ENCODE measurements at regions of chr1 and their contacts with region 1.

Region 1: GRCh38 chr1:151340870-151341754 is 5.9 kb downstream of the RFX5 start:
- DNase-seq: peak; percentile 19 to 65 (median 60)
- H3K4me3 ChIP-seq: no peak overlapping the region
- H3K4me3 Mint-ChIP-seq: peak overlapping the region in 1 of 7 donors; percentile 34
- H3K27ac ChIP-seq: no peak overlapping the region
- H3K27ac Mint-ChIP-seq: peak overlapping the region; percentile 9 to 95 (median 70)
- H3K4me1 ChIP-seq: peaks cover 18% of the 10 kb centered on the region
- H3K4me1 Mint-ChIP-seq: peaks cover 17 to 31% (median 31%) of the 10 kb centered on the region in 3 donors
- H3K27me3 ChIP-seq: no peaks in the 10 kb centered on the region
- H3K27me3 Mint-ChIP-seq: no peaks in the 10 kb centered on the region

Region 2: GRCh38 chr1:151098126-151098525 is 243.0 kb before region 1 on chr1:
- CTCF ChIA-PET with region 1: interaction called, 12 read pairs
- POLR2A ChIA-PET with region 1: no interaction called
- DNase-seq: no peak
- H3K4me3 ChIP-seq: no peak overlapping the region
- H3K4me3 Mint-ChIP-seq: no peak overlapping the region
- H3K27ac ChIP-seq: no peak overlapping the region
- H3K27ac Mint-ChIP-seq: peak overlapping the region in 2 of 8 donors; percentile 26 to 29
- H3K4me1 ChIP-seq: no peaks in the 10 kb centered on the region
- H3K4me1 Mint-ChIP-seq: no peaks in the 10 kb centered on the region
- H3K27me3 ChIP-seq: no peaks in the 10 kb centered on the region
- H3K27me3 Mint-ChIP-seq: no peaks in the 10 kb centered on the region

Region 3: GRCh38 chr1:151251656-151252470 is 89.2 kb before region 1 on chr1:
- CTCF ChIA-PET with region 1: interaction called, 13 read pairs
- POLR2A ChIA-PET with region 1: no interaction called
- DNase-seq: peak; percentile 29 to 72 (median 55)
- H3K4me3 ChIP-seq: no peak overlapping the region
- H3K4me3 Mint-ChIP-seq: peak overlapping the region in 2 of 7 donors; percentile 21 to 66
- H3K27ac ChIP-seq: no peak overlapping the region
- H3K27ac Mint-ChIP-seq: peak overlapping the region in 2 of 8 donors; percentile 70 to 79
- H3K4me1 ChIP-seq: peaks cover 11% of the 10 kb centered on the region
- H3K4me1 Mint-ChIP-seq: peaks cover 21 to 25% (median 22%) of the 10 kb centered on the region in 3 donors
- H3K27me3 ChIP-seq: no peaks in the 10 kb centered on the region
- H3K27me3 Mint-ChIP-seq: peaks cover 0 to 2% of the 10 kb centered on the region in 2 donors

Region 4: GRCh38 chr1:151282883-151283747 is 58.0 kb before region 1 on chr1:
- CTCF ChIA-PET with region 1: interaction called, 11 read pairs
- POLR2A ChIA-PET with region 1: interaction called, 3 read pairs
- DNase-seq: peak; percentile 3 to 53 (median 25)
- H3K4me3 ChIP-seq: peak overlapping the region; percentile 96
- H3K4me3 Mint-ChIP-seq: peak overlapping the region; percentile 89 to 98 (median 96)
- H3K27ac ChIP-seq: peak overlapping the region; percentile 98
- H3K27ac Mint-ChIP-seq: peak overlapping the region; percentile 86 to 97 (median 91)
- H3K4me1 ChIP-seq: peaks cover 22% of the 10 kb centered on the region
- H3K4me1 Mint-ChIP-seq: peaks cover 29 to 42% (median 35%) of the 10 kb centered on the region in 3 donors
- H3K27me3 ChIP-seq: no peaks in the 10 kb centered on the region
- H3K27me3 Mint-ChIP-seq: peaks cover 0 to 7% of the 10 kb centered on the region in 2 donors

Region 5: DNA sequence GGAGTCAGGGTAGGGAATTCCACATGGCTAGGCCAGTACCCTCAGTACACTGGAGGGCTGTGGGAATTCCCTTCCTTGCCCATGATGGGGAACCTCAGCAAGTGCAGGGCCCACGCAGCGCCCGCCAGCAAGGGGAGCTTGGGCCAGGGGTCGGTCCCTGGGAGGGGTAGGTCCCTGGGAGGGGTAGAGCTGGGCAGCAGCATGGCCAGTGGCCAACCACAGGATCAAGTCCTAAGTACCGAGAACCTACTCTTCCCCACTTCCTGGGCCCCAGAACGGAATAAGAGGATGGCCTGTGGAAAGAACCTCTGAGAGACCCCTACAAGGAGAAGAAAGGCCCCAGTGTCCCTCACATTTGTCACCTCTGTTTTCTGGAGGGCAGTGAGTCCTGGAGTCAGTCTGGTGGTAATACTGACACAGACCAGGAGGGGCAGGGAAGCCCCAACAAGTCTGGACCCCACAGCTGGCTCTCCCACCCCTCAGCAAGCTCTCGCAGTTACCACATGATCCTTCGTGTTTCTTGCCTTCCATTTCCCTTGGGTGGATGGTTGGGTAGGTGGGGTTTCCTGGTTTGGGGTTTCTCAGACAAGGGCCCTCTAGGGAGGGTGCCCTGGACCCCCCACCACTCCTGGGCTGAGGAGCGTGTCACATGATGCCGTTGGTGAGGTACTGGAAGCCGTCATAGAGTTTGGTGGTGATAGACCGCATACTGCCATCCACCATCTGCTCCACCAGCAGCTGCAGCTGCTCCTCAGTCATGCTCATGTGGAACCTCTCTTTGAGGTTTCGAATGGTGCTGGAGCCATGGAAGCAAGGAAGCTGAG is 48.7 kb before region 1 on chr1:
- CTCF ChIA-PET with region 1: interaction called, 14 read pairs
- POLR2A ChIA-PET with region 1: no interaction called
- DNase-seq: no peak
- H3K4me3 ChIP-seq: no peak overlapping the region
- H3K4me3 Mint-ChIP-seq: no peak overlapping the region
- H3K27ac ChIP-seq: no peak overlapping the region
- H3K27ac Mint-ChIP-seq: peak overlapping the region in 4 of 8 donors; percentile 17 to 81 (median 68)
- H3K4me1 ChIP-seq: no peaks in the 10 kb centered on the region
- H3K4me1 Mint-ChIP-seq: peaks cover 7 to 21% (median 8%) of the 10 kb centered on the region in 3 donors
- H3K27me3 ChIP-seq: no peaks in the 10 kb centered on the region
- H3K27me3 Mint-ChIP-seq: no peaks in the 10 kb centered on the region

Region 6: GRCh38 chr1:151311589-151312331 is 29.4 kb before region 1 on chr1:
- CTCF ChIA-PET with region 1: interaction called, 18 read pairs
- POLR2A ChIA-PET with region 1: no interaction called
- DNase-seq: peak in 4 of 5 donors; percentile 8 to 81 (median 22)
- H3K4me3 ChIP-seq: no peak overlapping the region
- H3K4me3 Mint-ChIP-seq: peak overlapping the region in 3 of 7 donors; percentile 16 to 20 (median 17)
- H3K27ac ChIP-seq: peak overlapping the region; percentile 73
- H3K27ac Mint-ChIP-seq: peak overlapping the region; percentile 51 to 92 (median 82)
- H3K4me1 ChIP-seq: peaks cover 19% of the 10 kb centered on the region
- H3K4me1 Mint-ChIP-seq: peaks cover 43 to 57% (median 49%) of the 10 kb centered on the region in 3 donors
- H3K27me3 ChIP-seq: no peaks in the 10 kb centered on the region
- H3K27me3 Mint-ChIP-seq: peaks cover 0 to 1% of the 10 kb centered on the region in 2 donors

Region 7: GRCh38 chr1:151327223-151327902 is 13.7 kb before region 1 on chr1 and contains the start of gene PI4KB:
- CTCF ChIA-PET with region 1: interaction called, 64 read pairs
- POLR2A ChIA-PET with region 1: interaction called, 13 read pairs
- DNase-seq: peak; percentile 80 to 95 (median 92)
- H3K4me3 ChIP-seq: peak within 1 kb of the TSS; percentile 85
- H3K4me3 Mint-ChIP-seq: peak within 1 kb of the TSS; percentile 91 to 99 (median 93)
- H3K27ac ChIP-seq: peak within 1 kb of the TSS; percentile 83
- H3K27ac Mint-ChIP-seq: peak within 1 kb of the TSS; percentile 86 to 100 (median 98)
- H3K4me1 ChIP-seq: peaks cover 25% of the 10 kb centered on the region
- H3K4me1 Mint-ChIP-seq: peaks cover 36 to 49% (median 49%) of the 10 kb centered on the region in 3 donors
- H3K27me3 ChIP-seq: no peaks in the 10 kb centered on the region
- H3K27me3 Mint-ChIP-seq: no peaks in the 10 kb centered on the region
- total RNA-seq, gene PI4KB: 59.9 to 65.5 TPM

Region 8: DNA sequence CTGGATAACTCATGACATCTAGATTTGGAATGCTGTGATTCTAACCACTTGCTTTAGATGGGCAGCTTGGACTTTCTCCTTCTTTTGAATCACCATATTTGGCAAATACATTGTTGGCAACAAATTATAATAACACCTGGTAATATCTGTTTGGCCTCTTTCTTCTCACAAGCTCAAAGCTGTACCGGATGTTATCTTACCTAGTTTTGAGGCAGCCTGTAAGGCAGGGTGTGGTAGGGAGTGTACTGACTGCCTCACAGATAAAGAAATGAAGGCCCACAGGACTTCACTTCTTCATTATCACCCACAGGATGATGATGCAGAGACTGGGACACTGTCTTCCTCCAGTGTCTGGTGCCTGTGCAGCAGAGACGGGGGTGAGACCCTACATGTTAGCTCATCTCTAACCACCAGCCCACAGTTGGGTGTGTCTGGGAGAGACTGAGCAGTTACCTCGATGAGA is 227.5 kb after region 1 on chr1:
- CTCF ChIA-PET with region 1: no interaction called
- POLR2A ChIA-PET with region 1: no interaction called
- DNase-seq: peak in 3 of 5 donors; percentile 13 to 55 (median 22)
- H3K4me3 ChIP-seq: no peak overlapping the region
- H3K4me3 Mint-ChIP-seq: no peak overlapping the region
- H3K27ac ChIP-seq: no peak overlapping the region
- H3K27ac Mint-ChIP-seq: peak overlapping the region in 7 of 8 donors; percentile 12 to 89 (median 78)
- H3K4me1 ChIP-seq: no peaks in the 10 kb centered on the region
- H3K4me1 Mint-ChIP-seq: peaks cover 2 to 5% (median 5%) of the 10 kb centered on the region in 3 donors
- H3K27me3 ChIP-seq: no peaks in the 10 kb centered on the region
- H3K27me3 Mint-ChIP-seq: no peaks in the 10 kb centered on the region